ENCODE measurements at regions of chr18 and their contacts with region 1.

Region 1: DNA sequence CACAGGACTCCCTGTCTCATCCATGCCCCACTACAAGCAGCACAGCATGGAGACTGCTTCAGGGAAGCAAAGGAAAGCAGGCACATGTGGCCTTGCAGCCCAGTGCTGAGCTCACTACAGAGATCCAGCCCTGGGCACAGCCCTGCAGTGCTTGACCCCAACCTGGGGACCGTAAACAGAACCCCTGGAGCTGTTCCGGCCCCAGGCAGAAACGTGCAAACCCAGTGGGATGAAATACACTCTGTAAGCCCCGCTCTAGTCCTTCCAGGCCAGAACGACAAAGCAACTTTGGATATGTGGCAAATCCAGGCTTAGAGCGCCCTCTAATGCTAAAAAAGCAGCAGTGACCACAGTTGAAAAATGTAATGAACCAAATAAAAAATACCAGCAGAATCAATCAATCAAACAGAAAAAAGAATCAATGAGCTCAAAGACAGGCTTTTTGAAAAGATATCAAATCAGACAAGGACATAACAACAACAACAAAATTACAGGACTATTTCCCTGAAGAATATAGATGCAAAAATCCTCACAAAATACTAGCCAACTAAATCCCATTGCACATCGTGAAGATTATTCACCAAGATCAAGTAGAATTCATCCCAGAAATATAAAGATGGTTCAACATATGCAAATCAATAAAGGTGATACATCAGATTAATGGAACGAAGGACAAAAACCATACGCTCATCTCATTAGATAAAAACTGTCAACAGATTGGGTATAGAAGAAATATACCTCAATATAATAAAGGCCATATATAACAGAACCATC is 45.6 kb downstream of the ZNF519 start:
- DNase-seq: no peak
- ATAC-seq: peak; percentile 42
- H3K4me3 Mint-ChIP-seq: no peak overlapping the region
- H3K27ac Mint-ChIP-seq: no peak overlapping the region
- H3K4me1 Mint-ChIP-seq: no peaks in the 10 kb centered on the region
- H3K27me3 Mint-ChIP-seq: no peaks in the 10 kb centered on the region

Region 2: DNA sequence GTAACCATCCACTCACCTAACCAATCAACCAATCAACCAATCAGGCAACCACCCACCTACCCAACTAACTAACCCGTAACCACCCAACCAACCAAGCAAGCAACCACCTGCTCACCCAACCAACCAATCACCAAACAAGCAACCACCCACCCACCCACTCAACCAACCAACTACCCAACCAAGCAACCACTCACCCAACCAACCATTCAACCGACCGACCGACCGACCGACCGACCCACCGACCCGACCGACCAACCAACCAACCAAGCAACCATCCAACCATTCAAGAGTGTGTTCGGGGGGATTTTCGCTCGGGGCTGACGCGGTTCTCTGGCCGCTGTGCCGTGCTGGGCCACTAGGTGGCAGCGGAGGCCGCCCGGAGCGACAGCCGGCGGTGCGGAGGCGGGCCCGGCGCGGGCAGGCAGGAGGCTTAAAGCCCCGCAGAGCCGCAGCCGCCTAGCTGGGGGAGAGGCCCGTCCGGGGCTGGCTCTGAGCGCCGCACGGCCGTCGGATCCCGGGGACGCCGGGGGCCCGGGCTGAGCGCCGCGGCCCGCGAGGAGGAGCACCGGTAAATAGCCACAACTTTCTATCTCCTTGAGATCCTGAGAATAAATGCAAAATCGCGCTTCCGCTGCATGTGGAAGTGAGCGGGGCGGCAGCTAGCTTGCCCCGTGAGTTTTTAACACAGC is 262.8 kb before region 1 on chr18 and contains the start of gene MC5R:
- CTCF ChIA-PET with region 1: interaction called, 17 read pairs
- POLR2A ChIA-PET with region 1: no interaction called
- DNase-seq: peak; percentile 74
- ATAC-seq: peak; percentile 99
- H3K4me3 Mint-ChIP-seq: peak within 1 kb of the TSS; percentile 40
- H3K27ac Mint-ChIP-seq: no peak within 1 kb of the TSS
- H3K4me1 Mint-ChIP-seq: peaks cover 9% of the 10 kb centered on the region
- H3K27me3 Mint-ChIP-seq: peaks cover 12% of the 10 kb centered on the region
- total RNA-seq, gene MC5R: not detected

Region 3: DNA sequence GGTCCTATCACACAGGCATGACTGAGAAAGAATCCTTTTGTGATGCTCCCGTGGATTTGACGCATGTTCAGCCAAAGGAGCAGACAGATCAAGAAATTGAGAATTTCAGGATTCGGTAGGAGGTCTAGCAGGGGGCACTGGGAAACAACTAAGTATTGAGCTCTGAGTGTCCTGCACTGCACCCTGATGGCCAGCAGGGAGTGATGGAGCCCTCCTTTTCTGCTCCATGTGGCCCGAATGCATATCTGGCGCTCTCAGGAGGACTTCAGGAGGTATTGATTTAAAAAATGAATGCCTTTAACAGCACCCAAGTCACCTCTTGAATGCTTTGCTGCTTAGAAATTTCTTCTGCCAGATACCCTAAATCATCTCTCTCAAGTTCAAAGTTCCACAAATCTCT is 12.5 kb before region 1 on chr18:
- CTCF ChIA-PET with region 1: interaction called, 10 read pairs
- POLR2A ChIA-PET with region 1: no interaction called
- DNase-seq: no peak
- ATAC-seq: no peak
- H3K4me3 Mint-ChIP-seq: no peak overlapping the region
- H3K27ac Mint-ChIP-seq: no peak overlapping the region
- H3K4me1 Mint-ChIP-seq: no peaks in the 10 kb centered on the region
- H3K27me3 Mint-ChIP-seq: no peaks in the 10 kb centered on the region

Measured in activated CD8-positive, alpha-beta T cell treated with anti-CD3 and anti-CD28 coated beads, Interleukin-2, amount 10 ng/mL, durations not matched to agents 7 days and 5 days (primary cell).